ENCODE measurements at regions of chrX and their contacts with region 1.

Region 1: GRCh38 chrX:81121513-81122382 is 80.0 kb downstream of the HMGN5 start:
- DNase-seq: peak; percentile 91
- H3K4me3 ChIP-seq: peak overlapping the region; percentile 82
- H3K27ac ChIP-seq: peak overlapping the region; percentile 58
- H3K4me1 ChIP-seq: peaks cover 15% of the 10 kb centered on the region
- CTCF ChIP-seq: no peak

Region 2: DNA sequence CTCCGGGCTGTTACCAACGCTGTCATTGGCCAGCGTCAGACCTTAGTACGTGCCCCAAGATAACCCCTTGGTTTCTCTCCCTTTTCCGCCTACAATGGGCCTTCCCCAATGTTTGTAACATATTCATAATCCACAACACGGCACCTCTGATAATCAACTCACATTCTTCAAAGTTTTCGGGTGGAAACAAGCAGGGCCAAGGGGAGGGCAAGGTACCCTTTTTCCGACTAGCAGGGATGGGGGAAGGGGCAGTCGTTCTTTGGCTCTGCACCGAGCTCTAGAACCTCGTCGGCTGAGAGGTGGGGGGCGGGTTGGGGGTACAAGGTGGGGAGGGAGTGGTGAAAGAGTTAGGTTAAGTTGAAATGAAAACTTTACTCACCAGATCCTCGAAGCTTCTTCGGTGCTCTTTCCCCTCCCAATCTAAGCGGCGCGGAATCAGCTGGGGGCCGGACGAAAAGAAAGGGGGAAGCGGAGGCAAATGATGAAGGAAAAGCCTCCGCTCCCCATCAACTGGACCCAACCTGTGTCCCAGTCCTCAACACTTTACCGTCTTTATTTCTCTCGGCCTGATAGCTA is 313.5 kb before region 1 on chrX:
- CTCF ChIA-PET with region 1: no interaction called
- POLR2A ChIA-PET with region 1: no interaction called
- intact Hi-C with region 1: loop called (anchors 2 kb)
- DNase-seq: peak; percentile 82
- H3K4me3 ChIP-seq: peak overlapping the region; percentile 92
- H3K27ac ChIP-seq: peak overlapping the region; percentile 78
- H3K4me1 ChIP-seq: peaks cover 33% of the 10 kb centered on the region
- CTCF ChIP-seq: no peak

Region 3: DNA sequence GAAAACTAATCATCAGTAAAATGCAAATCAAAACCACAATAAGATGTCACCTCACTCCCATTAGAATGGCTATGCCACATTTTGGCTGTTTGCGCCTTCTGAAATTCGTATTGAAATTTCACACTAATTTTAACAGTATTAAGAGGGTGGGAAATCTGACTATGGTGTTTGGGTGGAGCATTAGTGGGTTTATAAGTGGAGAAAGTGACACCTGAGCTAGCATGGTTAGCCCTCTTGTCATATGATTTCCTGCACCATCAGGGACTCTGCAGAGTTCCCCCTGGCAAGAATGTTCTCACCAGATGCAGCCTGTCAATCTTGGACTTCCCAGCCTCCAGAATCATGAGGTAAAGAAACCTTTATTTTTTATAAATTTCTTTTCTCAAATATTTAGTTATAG is 280.5 kb before region 1 on chrX:
- CTCF ChIA-PET with region 1: no interaction called
- POLR2A ChIA-PET with region 1: no interaction called
- intact Hi-C with region 1: no loop called
- DNase-seq: no peak
- H3K4me3 ChIP-seq: no peak overlapping the region
- H3K27ac ChIP-seq: no peak overlapping the region
- H3K4me1 ChIP-seq: no peaks in the 10 kb centered on the region
- CTCF ChIP-seq: no peak

Region 4: GRCh38 chrX:80876877-80877276 is 244.9 kb before region 1 on chrX:
- CTCF ChIA-PET with region 1: no interaction called
- POLR2A ChIA-PET with region 1: no interaction called
- intact Hi-C with region 1: loop called (anchors 2 kb)
- DNase-seq: peak; percentile 55
- H3K4me3 ChIP-seq: no peak overlapping the region
- H3K27ac ChIP-seq: no peak overlapping the region
- H3K4me1 ChIP-seq: no peaks in the 10 kb centered on the region
- CTCF ChIP-seq: peak; percentile 77

Region 5: GRCh38 chrX:81082649-81083048 is 39.1 kb before region 1 on chrX:
- CTCF ChIA-PET with region 1: no interaction called
- POLR2A ChIA-PET with region 1: interaction called, 3 read pairs
- intact Hi-C with region 1: loop called (anchors 1 kb)
- DNase-seq: peak; percentile 91
- H3K4me3 ChIP-seq: peak overlapping the region; percentile 46
- H3K27ac ChIP-seq: peak overlapping the region; percentile 82
- H3K4me1 ChIP-seq: peaks cover 42% of the 10 kb centered on the region
- CTCF ChIP-seq: peak; percentile 52

Region 6: DNA sequence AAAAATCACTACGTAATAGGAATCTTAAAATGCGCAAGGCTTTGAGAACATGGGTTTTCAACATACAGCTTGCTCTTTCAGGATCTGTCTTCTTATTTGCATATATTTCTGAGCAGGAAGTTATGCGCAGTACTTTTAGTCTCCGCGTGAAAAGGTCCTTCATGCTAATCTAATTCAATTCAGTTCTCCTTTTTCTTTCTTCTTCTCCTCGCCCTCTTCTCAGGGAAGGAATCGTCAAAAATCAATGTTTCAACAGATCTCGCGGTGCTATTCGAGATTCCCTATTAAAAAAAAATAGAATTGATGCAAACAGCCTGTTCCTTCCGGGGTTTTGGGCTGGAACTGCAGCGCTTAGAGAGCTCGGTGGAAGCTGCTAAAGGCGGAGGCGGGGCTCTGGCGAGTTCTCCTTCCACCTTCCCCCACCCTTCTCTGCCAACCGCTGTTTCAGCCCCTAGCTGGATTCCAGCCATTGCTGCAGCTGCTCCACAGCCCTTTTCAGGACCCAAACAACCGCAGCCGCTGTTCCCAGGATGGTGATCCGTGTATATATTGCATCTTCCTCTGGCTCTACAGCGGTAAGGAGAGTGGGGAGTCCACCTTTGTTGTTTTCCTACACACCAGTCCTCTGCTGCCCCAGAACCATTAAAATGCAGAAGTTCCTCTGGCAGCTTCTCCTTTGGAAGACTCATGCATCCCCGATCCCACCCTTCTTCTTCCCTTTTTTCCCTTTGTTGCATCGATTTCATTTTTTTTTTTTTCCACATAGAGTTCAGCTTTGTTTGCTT is 80.1 kb after region 1 on chrX and contains the starts of genes HMGN5 and SH3BGRL:
- CTCF ChIA-PET with region 1: no interaction called
- POLR2A ChIA-PET with region 1: interaction called, 5 read pairs
- intact Hi-C with region 1: loop called (anchors 5 kb)
- DNase-seq: peak; percentile 85
- H3K4me3 ChIP-seq: peak within 1 kb of the TSS; percentile 95
- H3K27ac ChIP-seq: peak within 1 kb of the TSS; percentile 95
- H3K4me1 ChIP-seq: peaks cover 21% of the 10 kb centered on the region
- CTCF ChIP-seq: no peak
- total RNA-seq, gene HMGN5: 2.0 and 9.5 TPM in 2 replicates
- total RNA-seq, gene SH3BGRL: 56.2 and 63.5 TPM in 2 replicates

Measured in OCI-LY7 (cell line).